RWPE1 (cell line): ENCODE measurements at regions of chr16 and their contacts with region 1.

Region 1: GRCh38 chr16:21300309-21301167 is 22.4 kb upstream of the CRYM start:
- DNase-seq: peak; percentile 94
- H3K27ac ChIP-seq: peak overlapping the region; percentile 97
- CTCF ChIP-seq: peak; percentile 96

Region 2: GRCh38 chr16:21158208-21159110 is 142.1 kb before region 1 on chr16 and contains the start of gene LDAF1:
- CTCF ChIA-PET with region 1: interaction called, 32 read pairs
- POLR2A ChIA-PET with region 1: interaction called, 7 read pairs
- DNase-seq: peak; percentile 81
- H3K27ac ChIP-seq: peak within 1 kb of the TSS; percentile 89
- CTCF ChIP-seq: no peak

Region 3: DNA sequence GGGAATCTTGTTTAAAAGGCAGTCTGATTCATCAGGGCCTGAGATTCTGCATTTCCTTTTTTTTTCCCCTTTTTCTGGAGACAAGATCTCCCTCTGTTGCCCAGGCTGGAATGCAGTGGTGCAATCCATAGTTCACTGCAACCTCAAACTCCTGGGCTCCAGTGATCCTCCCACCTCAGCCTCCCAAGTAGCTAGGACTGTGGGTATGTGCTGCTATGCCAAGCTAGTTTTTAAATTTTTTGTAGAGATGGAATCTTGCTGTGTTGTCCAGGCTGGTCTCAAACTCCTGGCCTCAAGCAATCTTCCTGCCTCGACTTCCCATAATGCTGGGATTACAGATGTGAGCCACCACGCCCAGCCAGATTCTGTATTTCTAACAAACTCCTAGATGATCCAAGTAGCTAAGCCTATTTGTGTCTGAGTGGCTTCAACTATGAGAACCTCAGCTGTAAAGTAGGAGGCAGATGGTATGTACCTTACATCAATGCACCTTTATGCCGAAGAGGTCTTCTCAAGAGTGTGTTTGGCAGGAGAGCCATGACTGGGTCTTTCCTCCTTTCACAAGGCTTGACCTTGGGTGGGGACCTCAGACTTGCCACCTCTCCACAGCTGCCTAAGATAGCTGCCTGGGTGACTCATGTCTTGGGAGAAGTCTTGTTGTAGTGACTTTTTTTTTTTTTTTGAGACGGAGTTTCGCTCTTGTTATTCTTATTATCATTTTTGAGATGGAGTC is 131.1 kb before region 1 on chr16:
- CTCF ChIA-PET with region 1: interaction called, 4 read pairs
- POLR2A ChIA-PET with region 1: interaction called, 14 read pairs
- DNase-seq: no peak
- H3K27ac ChIP-seq: no peak overlapping the region
- CTCF ChIP-seq: no peak

Region 4: GRCh38 chr16:21189311-21189710 is 111.2 kb before region 1 on chr16:
- CTCF ChIA-PET with region 1: interaction called, 30 read pairs
- POLR2A ChIA-PET with region 1: no interaction called
- DNase-seq: no peak
- H3K27ac ChIP-seq: no peak overlapping the region
- CTCF ChIP-seq: no peak

Region 5: DNA sequence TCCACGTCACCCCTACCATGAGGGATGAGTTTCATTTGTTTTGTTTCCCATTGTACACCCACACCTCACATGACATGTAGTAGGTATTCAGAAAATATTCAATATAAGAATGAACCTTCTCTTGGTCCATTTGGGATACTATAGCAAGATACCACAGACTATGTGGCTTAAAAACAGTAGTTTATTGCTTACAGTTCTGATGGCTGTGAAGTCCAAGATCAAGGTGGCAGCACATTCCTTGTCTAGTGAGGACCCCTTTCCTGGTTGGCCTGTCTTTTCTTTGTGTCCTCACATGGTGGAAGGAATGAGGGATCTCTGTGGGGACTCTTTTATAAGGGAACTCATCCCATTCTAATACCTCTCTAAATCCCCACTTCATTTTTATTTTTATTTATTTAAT is 13.8 kb after region 1 on chr16:
- CTCF ChIA-PET with region 1: interaction called, 12 read pairs
- POLR2A ChIA-PET with region 1: no interaction called
- DNase-seq: no peak
- H3K27ac ChIP-seq: no peak overlapping the region
- CTCF ChIP-seq: no peak